ENCODE measurements at regions of chr3 and their contacts with region 1.

Region 1: DNA sequence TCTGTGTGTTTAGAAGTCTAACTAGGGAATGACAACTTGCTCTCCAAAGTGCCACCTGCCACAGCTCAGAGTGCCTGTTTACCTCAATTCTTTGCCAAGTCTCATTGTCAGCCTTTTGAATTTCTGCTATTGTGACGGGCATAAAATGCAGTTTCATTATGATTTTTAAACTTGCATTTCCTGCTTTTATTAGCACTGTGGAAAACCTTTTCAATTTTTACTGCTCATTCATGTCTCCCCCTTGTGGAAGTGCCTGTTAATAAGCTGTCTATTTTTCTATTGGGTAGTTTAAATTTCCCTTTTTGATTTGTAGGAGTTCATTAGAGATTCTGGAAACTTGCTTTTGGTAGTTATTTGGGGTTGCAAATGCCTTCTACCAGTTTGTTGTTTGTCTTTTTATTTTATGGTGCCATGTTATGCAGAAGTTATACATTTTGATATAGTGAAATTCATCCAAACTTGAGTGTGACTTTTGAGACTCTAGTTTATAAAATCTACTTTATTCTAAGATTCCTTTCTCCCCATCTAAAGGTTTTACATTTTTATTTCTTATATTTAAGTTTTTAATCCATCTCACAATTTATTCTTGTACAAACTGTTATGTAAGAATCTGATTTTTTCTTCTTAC is 53.9 kb upstream of the FRMD4B start:
- DNase-seq: peak; percentile 13
- CTCF ChIP-seq: peak; percentile 59

Region 2: GRCh38 chr3:69425261-69425660 is 14.5 kb before region 1 on chr3:
- CTCF ChIA-PET with region 1: interaction called, 18 read pairs
- POLR2A ChIA-PET with region 1: no interaction called
- DNase-seq: peak; percentile 37
- CTCF ChIP-seq: peak; percentile 51

Region 3: GRCh38 chr3:69451594-69451993 is 11.8 kb after region 1 on chr3:
- CTCF ChIA-PET with region 1: interaction called, 13 read pairs
- POLR2A ChIA-PET with region 1: no interaction called
- DNase-seq: no peak
- CTCF ChIP-seq: no peak

Region 4: DNA sequence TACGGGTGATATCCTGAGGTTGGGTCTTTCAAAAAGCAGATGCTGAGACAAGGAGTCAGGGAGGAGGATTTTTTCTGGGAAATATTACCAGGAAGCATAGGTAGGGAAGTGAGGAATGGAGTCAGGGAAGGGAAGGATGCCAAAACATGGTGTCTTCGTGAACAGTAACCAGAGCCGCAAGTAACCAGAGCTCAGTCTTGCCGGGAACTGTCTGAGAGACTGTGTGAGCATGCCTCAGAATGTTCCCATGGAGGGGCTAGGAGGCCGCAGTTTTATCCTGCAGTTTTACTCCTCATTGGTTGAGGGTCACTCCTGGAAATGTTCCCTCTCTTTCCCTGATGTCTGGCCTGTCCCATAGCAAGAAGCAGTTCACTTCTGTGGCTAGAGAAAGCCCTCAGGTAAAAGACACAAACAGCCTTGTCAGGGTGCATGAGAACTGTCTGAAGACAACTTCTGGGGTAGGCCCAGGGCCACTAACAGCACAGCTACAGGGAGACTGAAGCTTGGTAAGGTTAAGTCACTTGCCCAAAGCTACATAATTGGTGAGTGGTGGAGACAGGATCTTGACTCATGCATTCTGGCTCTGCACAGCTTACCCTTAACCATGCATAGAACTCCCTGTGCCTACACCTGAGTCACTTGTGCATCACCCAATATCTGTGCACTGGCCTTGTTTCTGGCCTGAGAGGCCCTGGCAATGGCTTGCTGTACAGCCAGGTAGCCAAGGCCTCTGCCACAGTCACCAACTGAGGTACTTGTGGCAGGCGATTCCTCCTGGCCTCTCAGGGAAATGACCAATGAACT is 22.5 kb after region 1 on chr3:
- CTCF ChIA-PET with region 1: no interaction called
- POLR2A ChIA-PET with region 1: no interaction called
- DNase-seq: no peak
- CTCF ChIP-seq: no peak